Right ventricle myocardium inferior (tissue), 1 donor: ENCODE measurements at regions of chr18 and their contacts with region 1.

Region 1: GRCh38 chr18:46073474-46074331 is 1.6 kb upstream of the PSTPIP2 start:
- DNase-seq: no peak
- ATAC-seq: peak; percentile 39

Region 2: GRCh38 chr18:45967007-45967706 is 106.5 kb before region 1 on chr18 and contains the start of gene EPG5:
- intact Hi-C with region 1: loop called (anchors 5 kb)
- DNase-seq: peak; percentile 97
- ATAC-seq: peak; percentile 100
- total RNA-seq, gene EPG5: 18.2 TPM